ENCODE measurements at regions of chr12 and their contacts with region 1.

Region 1: DNA sequence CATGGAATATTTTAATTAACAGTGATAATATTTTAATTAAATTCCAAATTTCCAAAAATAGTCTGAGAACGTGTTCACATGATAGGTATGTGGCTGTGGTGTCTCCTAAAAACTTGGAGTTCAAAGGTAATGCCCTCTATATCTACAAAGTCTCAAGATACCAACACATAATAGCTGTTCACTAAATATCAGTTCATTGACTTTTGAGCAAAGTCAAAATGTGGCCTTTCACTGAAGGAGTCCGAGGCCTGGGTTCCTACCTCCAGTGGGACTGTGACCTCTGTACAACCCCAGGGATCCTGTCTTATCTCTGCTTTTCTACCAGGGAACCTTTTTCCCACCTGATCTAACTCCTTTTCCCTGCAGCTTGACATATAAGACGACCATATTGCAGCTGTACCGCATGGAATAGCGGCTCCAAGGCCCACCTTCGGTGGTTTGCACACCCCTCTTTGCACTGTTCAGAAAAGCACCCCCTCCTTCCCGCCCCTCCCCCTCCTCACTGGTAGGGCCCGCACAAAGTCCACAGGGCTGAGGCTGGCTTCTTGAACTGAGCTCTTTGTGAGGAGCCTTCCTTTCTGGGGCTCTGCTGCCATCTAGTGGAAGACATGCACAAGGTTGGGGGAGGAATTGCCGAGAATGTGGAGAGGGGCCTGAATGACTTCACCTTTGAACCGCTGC is 3.1 kb downstream of the CCND2 start:
- DNase-seq: peak; percentile 84
- H3K4me3 ChIP-seq: no peak overlapping the region; a peak in 1 of 4 replicates
- H3K27ac ChIP-seq: no peak overlapping the region
- H3K4me1 ChIP-seq: peaks cover 0 to 4% of the 10 kb centered on the region in 2 experiments; a peak in 2 of 4 replicates
- H3K27me3 ChIP-seq: peaks cover 97% of the 10 kb centered on the region
- CTCF ChIP-seq: peak; percentile 91
- EP300 ChIP-seq: no peak
- RAD21 ChIP-seq: peak; percentile 89

Region 2: GRCh38 chr12:3177778-3178425 is 1098.8 kb before region 1 on chr12:
- CTCF ChIA-PET with region 1: no interaction called
- POLR2A ChIA-PET with region 1: no interaction called
- DNase-seq: no peak
- H3K4me3 ChIP-seq: no peak overlapping the region
- H3K27ac ChIP-seq: no peak overlapping the region
- H3K4me1 ChIP-seq: peaks cover 0 to 4% of the 10 kb centered on the region in 2 experiments; a peak in 1 of 4 replicates
- H3K27me3 ChIP-seq: no peaks in the 10 kb centered on the region
- CTCF ChIP-seq: no peak
- EP300 ChIP-seq: no peak
- RAD21 ChIP-seq: no peak

Region 3: DNA sequence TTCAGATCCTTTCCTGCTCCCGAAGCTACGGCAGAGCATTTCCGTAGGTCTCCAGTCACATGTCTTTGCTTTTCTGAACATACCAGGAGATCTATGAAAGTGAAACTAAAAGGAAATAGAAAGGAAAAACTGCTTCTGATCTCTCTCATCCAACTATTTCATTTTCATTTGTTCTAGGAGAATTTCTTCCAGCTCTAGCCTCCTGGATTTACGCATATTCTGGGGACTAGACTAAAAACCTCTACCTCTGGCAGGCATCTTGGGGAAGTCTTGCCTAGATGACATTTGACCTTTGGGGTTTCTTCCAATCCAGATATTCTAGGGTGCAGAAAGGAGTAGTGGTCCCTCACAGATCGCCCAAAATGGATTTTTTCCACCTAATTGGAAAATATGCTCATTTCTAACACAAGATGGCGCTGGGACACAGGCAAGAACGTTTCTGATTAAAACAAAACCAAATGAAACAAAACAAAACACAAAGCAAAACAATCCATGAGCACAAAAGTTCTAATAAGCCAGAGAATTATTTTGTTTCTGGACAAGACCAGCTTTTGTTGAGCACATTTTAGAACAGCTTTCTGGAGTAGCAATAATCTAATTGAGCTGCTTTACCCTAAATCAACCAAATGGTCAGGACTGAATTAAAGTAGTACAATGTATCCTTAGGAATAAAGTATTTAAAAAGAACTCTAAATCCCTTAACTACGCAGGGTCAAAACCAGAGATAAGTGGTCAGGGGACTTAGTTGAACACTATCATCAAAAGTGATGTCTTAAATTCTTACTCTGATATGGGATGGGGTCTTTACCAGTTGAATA is 391.2 kb before region 1 on chr12:
- CTCF ChIA-PET with region 1: interaction called, 193 read pairs
- POLR2A ChIA-PET with region 1: interaction called, 3 read pairs
- DNase-seq: peak; percentile 30
- H3K4me3 ChIP-seq: peak overlapping the region; percentile 2 to 52; a peak in 3 of 4 replicates
- H3K27ac ChIP-seq: no peak overlapping the region
- H3K4me1 ChIP-seq: no peaks in the 10 kb centered on the region; a peak in 1 of 4 replicates
- H3K27me3 ChIP-seq: peaks cover 50% of the 10 kb centered on the region
- CTCF ChIP-seq: peak; percentile 90
- EP300 ChIP-seq: no peak
- RAD21 ChIP-seq: peak; percentile 80

Region 4: GRCh38 chr12:3964439-3964838 is 312.2 kb before region 1 on chr12:
- CTCF ChIA-PET with region 1: interaction called, 10 read pairs
- POLR2A ChIA-PET with region 1: no interaction called
- DNase-seq: peak; percentile 24
- H3K4me3 ChIP-seq: no peak overlapping the region
- H3K27ac ChIP-seq: no peak overlapping the region
- H3K4me1 ChIP-seq: no peaks in the 10 kb centered on the region
- H3K27me3 ChIP-seq: peaks cover 40% of the 10 kb centered on the region
- CTCF ChIP-seq: peak; percentile 41
- EP300 ChIP-seq: no peak
- RAD21 ChIP-seq: no peak

Region 5: DNA sequence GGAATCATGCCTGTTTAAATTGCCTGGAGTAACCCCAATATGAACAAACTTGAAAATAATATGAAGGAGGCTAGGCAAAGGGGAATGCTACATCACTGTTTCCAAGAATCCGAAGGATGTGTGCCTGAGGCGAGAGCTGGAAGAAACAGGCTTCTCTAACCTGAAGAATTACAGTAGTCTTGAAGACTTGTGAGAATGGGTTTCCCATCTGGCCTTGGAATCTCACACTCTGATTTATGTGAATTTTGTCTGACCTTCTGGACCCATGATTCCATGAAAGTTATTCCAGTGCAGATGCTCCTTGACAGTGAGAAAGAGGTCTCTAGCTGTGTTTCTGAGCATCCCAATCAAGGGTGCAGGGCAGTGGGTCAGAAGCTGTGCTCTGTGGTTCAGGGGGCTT is 281.4 kb before region 1 on chr12:
- CTCF ChIA-PET with region 1: interaction called, 35 read pairs
- POLR2A ChIA-PET with region 1: no interaction called
- DNase-seq: no peak
- H3K4me3 ChIP-seq: no peak overlapping the region
- H3K27ac ChIP-seq: no peak overlapping the region
- H3K4me1 ChIP-seq: no peaks in the 10 kb centered on the region
- H3K27me3 ChIP-seq: peaks cover 50% of the 10 kb centered on the region; the same call in 1 of the 2 replicates
- CTCF ChIP-seq: no peak
- EP300 ChIP-seq: no peak
- RAD21 ChIP-seq: no peak

Region 6: GRCh38 chr12:4116251-4117111 is 160.2 kb before region 1 on chr12:
- CTCF ChIA-PET with region 1: interaction called, 10 read pairs
- POLR2A ChIA-PET with region 1: no interaction called
- DNase-seq: no peak
- H3K4me3 ChIP-seq: no peak overlapping the region
- H3K27ac ChIP-seq: no peak overlapping the region
- H3K4me1 ChIP-seq: no peaks in the 10 kb centered on the region
- H3K27me3 ChIP-seq: peaks cover 30% of the 10 kb centered on the region
- CTCF ChIP-seq: no peak
- EP300 ChIP-seq: no peak
- RAD21 ChIP-seq: no peak

Region 7: DNA sequence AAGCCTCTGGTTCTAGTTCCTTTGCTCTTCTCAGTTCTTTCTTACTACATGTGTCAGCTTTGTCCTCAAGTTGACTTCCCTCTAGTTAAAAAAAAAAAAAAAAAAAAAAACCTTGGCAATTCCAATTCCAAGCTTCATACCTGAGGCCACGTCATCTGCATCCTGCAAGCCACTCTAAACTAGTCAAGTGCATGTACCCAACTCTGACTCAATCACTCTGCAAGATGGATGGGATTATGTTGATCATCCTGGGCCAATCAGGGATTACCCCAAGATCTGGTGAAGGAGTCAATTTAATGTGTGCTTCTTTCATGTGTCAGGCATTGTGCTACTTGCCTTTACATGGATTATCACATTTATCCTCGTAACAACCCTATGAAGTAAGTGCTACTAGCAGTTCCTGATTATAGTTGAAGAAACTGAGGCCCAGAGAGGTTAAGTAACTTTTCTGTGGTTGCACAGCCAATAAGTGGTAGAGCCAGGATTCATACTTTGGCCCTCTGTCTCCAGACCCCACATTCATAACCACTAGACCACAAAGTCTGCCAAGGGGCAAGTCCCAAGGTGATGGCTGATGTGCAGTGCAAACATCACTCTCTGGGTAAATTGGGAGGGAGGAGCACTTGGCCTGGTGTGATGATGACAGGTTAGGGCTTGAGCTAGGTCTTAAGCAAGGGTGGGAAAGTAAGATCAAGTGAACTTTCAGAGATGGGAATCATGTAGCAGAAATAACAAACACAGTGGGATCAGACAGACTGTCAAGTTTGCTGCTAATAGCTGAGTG is 20.4 kb before region 1 on chr12:
- CTCF ChIA-PET with region 1: interaction called, 10 read pairs
- POLR2A ChIA-PET with region 1: no interaction called
- DNase-seq: no peak
- H3K4me3 ChIP-seq: no peak overlapping the region
- H3K27ac ChIP-seq: no peak overlapping the region
- H3K4me1 ChIP-seq: no peaks in the 10 kb centered on the region
- H3K27me3 ChIP-seq: peaks cover 18% of the 10 kb centered on the region
- CTCF ChIP-seq: no peak
- EP300 ChIP-seq: no peak
- RAD21 ChIP-seq: no peak

Region 8: GRCh38 chr12:4287325-4288211 is 10.9 kb after region 1 on chr12:
- CTCF ChIA-PET with region 1: interaction called, 162 read pairs
- POLR2A ChIA-PET with region 1: no interaction called
- DNase-seq: no peak
- H3K4me3 ChIP-seq: no peak overlapping the region
- H3K27ac ChIP-seq: no peak overlapping the region
- H3K4me1 ChIP-seq: no peaks in the 10 kb centered on the region
- H3K27me3 ChIP-seq: peaks cover 98% of the 10 kb centered on the region
- CTCF ChIP-seq: no peak
- EP300 ChIP-seq: no peak
- RAD21 ChIP-seq: no peak